Heart left ventricle (tissue), 16 donors: ENCODE measurements at regions of chr12 and their contacts with region 1.

Region 1: DNA sequence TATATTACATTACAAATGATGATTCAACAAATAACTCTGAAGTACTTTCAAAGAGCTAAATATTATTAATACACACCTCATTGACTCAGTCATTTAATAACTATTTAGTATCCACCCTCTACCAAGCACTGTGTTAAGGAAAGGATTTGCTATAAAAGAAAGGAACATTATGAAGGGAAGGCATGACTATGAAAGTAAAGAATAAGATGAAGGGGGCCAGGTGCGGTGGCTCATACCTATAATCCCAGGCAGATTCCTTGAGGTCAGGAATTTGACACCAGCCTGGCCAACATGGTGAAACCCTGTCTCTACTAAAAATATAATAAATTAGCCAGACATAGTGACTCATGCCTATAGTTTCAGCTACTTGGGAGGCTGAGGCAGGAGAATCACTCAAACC is 107.9 kb downstream of the PLCZ1 start:
- DNase-seq: no peak
- ATAC-seq: no peak
- H3K4me3 ChIP-seq: no peak overlapping the region
- H3K27ac ChIP-seq: no peak overlapping the region
- H3K4me1 ChIP-seq: no peaks in the 10 kb centered on the region
- H3K27me3 ChIP-seq: no peaks in the 10 kb centered on the region
- CTCF ChIP-seq: no peak
- POLR2A ChIP-seq: no peak

Region 2: GRCh38 chr12:18589316-18589715 is 40.6 kb before region 1 on chr12:
- intact Hi-C with region 1: loop called in 1 of 10 experiments (anchors 10 kb)
- DNase-seq: no peak
- ATAC-seq: no peak
- H3K4me3 ChIP-seq: no peak overlapping the region
- H3K27ac ChIP-seq: no peak overlapping the region
- H3K4me1 ChIP-seq: no peaks in the 10 kb centered on the region
- H3K27me3 ChIP-seq: no peaks in the 10 kb centered on the region
- CTCF ChIP-seq: peak in 4 of 12 donors; percentile 15 to 25 (median 20)
- POLR2A ChIP-seq: no peak

Region 3: GRCh38 chr12:18612971-18613370 is 16.9 kb before region 1 on chr12:
- intact Hi-C with region 1: no loop called
- DNase-seq: no peak
- ATAC-seq: no peak
- H3K4me3 ChIP-seq: no peak overlapping the region
- H3K27ac ChIP-seq: no peak overlapping the region
- H3K4me1 ChIP-seq: no peaks in the 10 kb centered on the region
- H3K27me3 ChIP-seq: no peaks in the 10 kb centered on the region
- CTCF ChIP-seq: no peak
- POLR2A ChIP-seq: no peak